Dendritic cell treated with granulocyte-macrophage colony-stimulating factor and Interleukin-4, amounts not matched to agents 40 ng/mL and 50 ng/mL, for 4 days (primary cell): ENCODE measurements at regions of chr5 and their contacts with region 1.

Region 1: DNA sequence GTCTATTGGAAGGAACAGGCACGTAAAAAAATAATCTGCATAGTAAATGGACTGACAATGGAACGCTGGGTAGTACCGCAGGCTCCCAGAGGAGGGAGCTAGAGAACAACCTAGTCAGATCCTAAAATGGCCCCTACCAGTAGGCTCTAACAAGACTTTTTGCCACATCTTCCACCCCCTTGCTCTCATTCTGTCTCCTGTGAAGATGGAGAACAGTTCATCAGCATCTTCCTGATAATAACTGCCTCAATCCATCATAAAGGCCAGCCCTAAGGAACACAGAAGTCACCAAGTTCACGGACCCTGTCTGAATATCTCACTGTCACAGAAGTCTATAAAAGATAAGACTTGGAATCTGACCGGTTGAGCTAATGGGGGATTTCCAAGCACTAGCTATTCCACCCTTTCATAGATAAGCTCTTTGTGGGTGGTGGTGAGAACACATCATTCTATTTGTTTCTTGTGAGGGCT is 133.4 kb downstream of the SLC1A3 start:
- H3K4me3 Mint-ChIP-seq: no peak overlapping the region
- H3K27ac Mint-ChIP-seq: no peak overlapping the region
- H3K4me1 Mint-ChIP-seq: peaks cover 21% of the 10 kb centered on the region
- H3K27me3 Mint-ChIP-seq: peaks cover 17% of the 10 kb centered on the region

Region 2: GRCh38 chr5:36944607-36945225 is 204.9 kb after region 1 on chr5:
- intact Hi-C with region 1: loop called (anchors 5 kb)
- H3K4me3 Mint-ChIP-seq: no peak overlapping the region
- H3K27ac Mint-ChIP-seq: no peak overlapping the region
- H3K4me1 Mint-ChIP-seq: peaks cover 27% of the 10 kb centered on the region
- H3K27me3 Mint-ChIP-seq: no peaks in the 10 kb centered on the region

Region 3: DNA sequence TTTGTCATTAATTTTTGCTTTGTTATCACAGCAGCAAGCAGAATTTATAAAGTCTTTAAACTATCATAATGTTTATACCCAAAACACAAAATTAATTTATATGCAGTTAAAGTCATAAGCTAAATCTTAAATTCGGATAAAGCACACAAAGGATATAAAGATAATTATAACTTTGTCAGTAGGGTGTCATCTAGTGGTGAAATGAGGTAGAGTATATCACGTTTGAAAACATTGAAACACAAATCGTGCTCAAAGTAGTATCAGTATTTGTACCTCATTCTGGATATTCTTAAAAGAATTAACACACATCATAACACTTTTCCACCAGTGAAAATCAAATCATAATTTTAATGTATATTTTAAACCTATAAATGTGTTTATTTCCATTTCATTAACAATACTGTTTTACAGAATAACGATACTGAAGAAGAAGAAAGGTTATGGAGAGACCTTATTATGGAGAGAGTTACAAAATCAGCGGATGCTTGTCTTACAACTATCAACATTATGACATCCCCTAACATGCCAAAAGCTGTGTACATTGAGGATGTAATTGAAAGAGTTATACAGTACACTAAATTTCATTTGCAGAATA is 266.3 kb after region 1 on chr5:
- intact Hi-C with region 1: loop called (anchors 5 kb)
- H3K4me3 Mint-ChIP-seq: no peak overlapping the region
- H3K27ac Mint-ChIP-seq: no peak overlapping the region
- H3K4me1 Mint-ChIP-seq: no peaks in the 10 kb centered on the region
- H3K27me3 Mint-ChIP-seq: no peaks in the 10 kb centered on the region

Region 4: GRCh38 chr5:38104497-38105230 is 1364.9 kb after region 1 on chr5:
- intact Hi-C with region 1: no loop called
- H3K4me3 Mint-ChIP-seq: no peak overlapping the region
- H3K27ac Mint-ChIP-seq: no peak overlapping the region
- H3K4me1 Mint-ChIP-seq: no peaks in the 10 kb centered on the region
- H3K27me3 Mint-ChIP-seq: no peaks in the 10 kb centered on the region